ENCODE measurements at regions of chr11 and their contacts with region 1.

Region 1: DNA sequence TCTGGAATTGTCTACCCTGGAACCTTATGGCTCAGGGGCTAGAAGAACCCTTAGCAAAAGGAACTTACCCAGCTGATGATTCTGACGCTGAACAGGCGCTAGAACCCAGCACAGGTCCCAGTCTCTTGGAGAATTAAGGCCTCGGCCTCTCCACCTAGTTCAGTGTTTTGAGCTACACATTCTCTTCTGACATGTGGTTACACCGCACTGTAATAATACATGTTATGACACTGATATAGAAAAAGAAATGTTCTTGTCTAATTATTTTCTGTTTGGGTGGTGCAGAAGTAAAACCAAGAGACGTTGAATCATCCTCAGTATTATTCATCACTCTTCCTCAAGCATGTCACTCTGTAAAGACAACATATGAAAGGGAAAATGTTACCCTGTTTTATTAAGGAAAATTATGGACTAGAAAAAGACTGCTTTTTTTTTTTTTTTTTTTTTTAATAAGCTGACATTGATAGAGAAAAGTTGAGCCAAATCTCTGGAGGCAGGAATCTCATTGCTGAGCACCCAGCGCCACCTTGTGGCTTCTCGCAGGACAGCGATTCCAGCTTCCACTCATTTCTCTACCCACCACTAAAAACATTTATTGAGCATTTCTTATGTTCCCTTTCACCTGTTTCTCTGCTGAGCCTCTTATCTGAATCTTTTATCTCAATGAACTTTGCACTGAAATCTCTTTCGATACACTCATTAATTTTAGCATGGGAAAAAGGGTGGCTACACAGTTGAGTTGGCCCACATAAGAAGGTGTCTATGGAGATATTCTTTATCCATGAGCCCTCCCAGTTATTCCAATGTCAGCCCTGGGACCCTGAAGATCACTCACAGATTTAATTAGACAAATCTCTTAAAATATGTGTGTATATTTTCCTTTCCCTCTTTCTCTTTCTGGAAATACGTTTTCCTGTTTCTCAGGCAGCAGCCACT is 12.6 kb upstream of the APLNR start:
- DNase-seq: no peak
- H3K4me3 ChIP-seq: peak overlapping the region in 1 of 4 donors; percentile 39
- H3K27ac ChIP-seq: peak overlapping the region in 1 of 4 donors; percentile 40
- H3K4me1 ChIP-seq: peaks cover 0 to 9% (median 0%) of the 10 kb centered on the region in 3 donors
- H3K27me3 ChIP-seq: peaks cover 0 to 5% (median 0%) of the 10 kb centered on the region in 4 donors
- CTCF ChIP-seq: peak in 5 of 6 experiments; percentile 74 to 86 (median 82)
- POLR2A ChIP-seq: no peak

Region 2: GRCh38 chr11:56841210-56841810 is 408.3 kb before region 1 on chr11:
- intact Hi-C with region 1: loop called (anchors 5 kb)
- DNase-seq: no peak
- H3K4me3 ChIP-seq: no peak overlapping the region
- H3K27ac ChIP-seq: no peak overlapping the region
- H3K4me1 ChIP-seq: peaks cover 0 to 5% (median 0%) of the 10 kb centered on the region in 3 donors
- H3K27me3 ChIP-seq: peaks cover 0 to 4% (median 0%) of the 10 kb centered on the region in 4 donors
- CTCF ChIP-seq: peak in 5 of 6 experiments; percentile 55 to 76 (median 66)
- POLR2A ChIP-seq: no peak

Region 3: DNA sequence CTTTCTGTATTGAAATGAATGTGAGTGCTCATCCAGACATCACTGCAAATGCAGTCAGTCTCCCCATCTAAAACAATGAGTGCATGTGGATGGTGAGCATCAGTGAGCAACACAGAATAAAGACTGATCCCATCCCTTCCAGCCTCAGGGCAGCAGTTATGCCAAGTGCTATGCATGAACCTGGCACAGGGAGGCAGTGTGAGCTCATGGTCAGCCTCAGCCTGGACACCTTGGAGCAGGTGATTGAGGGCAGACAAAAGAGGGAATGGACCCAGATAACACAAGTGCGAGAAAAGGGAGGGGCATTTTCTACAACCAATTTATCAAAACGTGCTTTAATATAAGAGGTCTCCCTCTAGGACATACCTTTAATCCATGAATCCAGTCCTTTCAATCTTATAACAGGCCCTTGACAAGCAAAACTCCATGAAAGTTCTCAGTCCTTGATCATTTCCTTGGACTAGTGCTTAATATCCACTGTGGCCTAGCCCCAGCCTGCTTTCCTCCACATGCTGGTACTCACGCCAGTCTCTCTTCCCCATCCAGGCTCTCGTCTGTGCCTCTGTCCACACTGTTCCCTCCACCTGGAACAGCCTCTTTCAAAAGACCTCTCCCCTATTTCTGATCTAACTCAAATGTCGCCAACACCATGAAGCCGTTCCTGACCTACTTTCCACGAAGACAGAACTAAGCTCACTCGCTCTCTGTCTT is 118.4 kb before region 1 on chr11:
- intact Hi-C with region 1: loop called (anchors 5 kb)
- DNase-seq: no peak
- H3K4me3 ChIP-seq: no peak overlapping the region
- H3K27ac ChIP-seq: no peak overlapping the region
- H3K4me1 ChIP-seq: no peaks in the 10 kb centered on the region
- H3K27me3 ChIP-seq: peaks cover 0 to 13% (median 0%) of the 10 kb centered on the region in 4 donors
- CTCF ChIP-seq: peak in 5 of 6 experiments; percentile 43 to 80 (median 63)
- POLR2A ChIP-seq: no peak

Region 4: DNA sequence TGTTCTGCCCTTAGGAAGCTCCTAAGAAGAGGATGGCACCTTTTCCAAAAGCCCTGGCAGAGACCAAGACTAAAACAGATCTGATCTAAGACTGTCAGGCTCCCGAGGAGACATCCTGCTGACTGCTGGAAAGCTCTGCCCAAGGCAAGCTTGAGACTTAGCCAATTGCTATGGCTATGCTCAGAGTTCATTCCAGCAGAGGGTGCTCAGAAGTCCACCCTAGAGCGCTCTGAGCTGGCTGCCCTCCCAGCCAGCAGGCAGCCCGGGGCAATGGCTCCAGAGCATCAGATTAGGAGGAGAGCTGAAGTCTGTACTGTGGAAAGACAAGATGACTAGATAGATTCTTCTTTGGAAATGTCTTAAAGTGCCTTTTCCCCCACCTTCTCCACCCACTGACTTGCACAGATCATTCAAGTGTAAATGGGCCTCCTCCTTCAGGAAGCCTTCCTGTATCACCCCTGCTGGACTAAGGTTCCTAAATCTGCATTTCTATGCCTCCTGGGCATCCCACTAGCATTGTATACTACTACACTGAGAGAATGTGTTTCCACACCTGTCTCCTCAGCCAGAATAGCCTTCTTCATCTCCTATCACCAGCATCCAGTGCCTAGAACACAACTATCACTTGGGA is 44.5 kb before region 1 on chr11:
- intact Hi-C with region 1: no loop called
- DNase-seq: no peak
- H3K4me3 ChIP-seq: no peak overlapping the region
- H3K27ac ChIP-seq: no peak overlapping the region
- H3K4me1 ChIP-seq: peaks cover 0 to 40% (median 8%) of the 10 kb centered on the region in 3 donors
- H3K27me3 ChIP-seq: peaks cover 0 to 19% (median 0%) of the 10 kb centered on the region in 4 donors
- CTCF ChIP-seq: no peak
- POLR2A ChIP-seq: no peak